Naive thymus-derived CD4-positive, alpha-beta T cell (primary cell): ENCODE measurements at regions of chr20 and their contacts with region 1.

Region 1: GRCh38 chr20:21303061-21303871 is at the start of gene XRN2:
- DNase-seq: peak; percentile 88 to 97 (median 92)
- ATAC-seq: peak; percentile 91
- H3K4me3 ChIP-seq: peak within 1 kb of the TSS; percentile 84
- H3K4me3 Mint-ChIP-seq: peak within 1 kb of the TSS; percentile 96 to 99 (median 97)
- H3K27ac ChIP-seq: peak within 1 kb of the TSS; percentile 95
- H3K27ac Mint-ChIP-seq: peak within 1 kb of the TSS; percentile 93 to 100 (median 99)
- H3K4me1 ChIP-seq: peaks cover 9 to 19% of the 10 kb centered on the region in 2 donors
- H3K4me1 Mint-ChIP-seq: peaks cover 22 to 39% (median 29%) of the 10 kb centered on the region in 7 donors
- H3K27me3 ChIP-seq: no peaks in the 10 kb centered on the region
- H3K27me3 Mint-ChIP-seq: no peaks in the 10 kb centered on the region
- total RNA-seq, gene XRN2: 51.7 to 71.0 (median 56.5) TPM

Region 2: GRCh38 chr20:20712474-20713243 is 590.6 kb before region 1 on chr20 and contains the start of gene RALGAPA2:
- CTCF ChIA-PET with region 1: no interaction called
- POLR2A ChIA-PET with region 1: interaction called, 3 read pairs
- intact Hi-C with region 1: loop called (anchors 1 to 2 kb)
- DNase-seq: peak; percentile 91 to 97 (median 95)
- ATAC-seq: peak; percentile 98
- H3K4me3 ChIP-seq: peak within 1 kb of the TSS; percentile 97
- H3K4me3 Mint-ChIP-seq: peak within 1 kb of the TSS; percentile 89 to 98 (median 96)
- H3K27ac ChIP-seq: peak within 1 kb of the TSS; percentile 91
- H3K27ac Mint-ChIP-seq: peak within 1 kb of the TSS; percentile 90 to 98 (median 95)
- H3K4me1 ChIP-seq: peaks cover 9% of the 10 kb centered on the region in 2 donors
- H3K4me1 Mint-ChIP-seq: peaks cover 23 to 41% (median 29%) of the 10 kb centered on the region in 7 donors
- H3K27me3 ChIP-seq: no peaks in the 10 kb centered on the region
- H3K27me3 Mint-ChIP-seq: no peaks in the 10 kb centered on the region
- total RNA-seq, gene RALGAPA2: 27.5 to 45.4 (median 35.1) TPM

Region 3: GRCh38 chr20:20856306-20856705 is 447.0 kb before region 1 on chr20:
- CTCF ChIA-PET with region 1: no interaction called
- POLR2A ChIA-PET with region 1: no interaction called
- intact Hi-C with region 1: no loop called
- DNase-seq: no peak
- ATAC-seq: peak; percentile 26
- H3K4me3 ChIP-seq: no peak overlapping the region
- H3K4me3 Mint-ChIP-seq: no peak overlapping the region
- H3K27ac ChIP-seq: no peak overlapping the region
- H3K27ac Mint-ChIP-seq: no peak overlapping the region
- H3K4me1 ChIP-seq: no peaks in the 10 kb centered on the region
- H3K4me1 Mint-ChIP-seq: no peaks in the 10 kb centered on the region
- H3K27me3 ChIP-seq: no peaks in the 10 kb centered on the region
- H3K27me3 Mint-ChIP-seq: peaks cover 11 to 37% (median 29%) of the 10 kb centered on the region in 5 donors

Region 4: GRCh38 chr20:21125849-21126580 is 177.3 kb before region 1 on chr20 and contains the start of gene KIZ:
- CTCF ChIA-PET with region 1: no interaction called
- POLR2A ChIA-PET with region 1: interaction called, 4 read pairs
- intact Hi-C with region 1: loop called (anchors 1 kb)
- DNase-seq: peak; percentile 93 to 100 (median 97)
- ATAC-seq: peak; percentile 100
- H3K4me3 ChIP-seq: peak within 1 kb of the TSS; percentile 56
- H3K4me3 Mint-ChIP-seq: peak within 1 kb of the TSS; percentile 86 to 98 (median 90)
- H3K27ac ChIP-seq: peak within 1 kb of the TSS; percentile 77
- H3K27ac Mint-ChIP-seq: peak within 1 kb of the TSS; percentile 70 to 97 (median 88)
- H3K4me1 ChIP-seq: peaks cover 10 to 16% of the 10 kb centered on the region in 2 donors
- H3K4me1 Mint-ChIP-seq: peaks cover 11 to 35% (median 21%) of the 10 kb centered on the region in 7 donors
- H3K27me3 ChIP-seq: no peaks in the 10 kb centered on the region
- H3K27me3 Mint-ChIP-seq: peaks cover 0 to 4% (median 0%) of the 10 kb centered on the region in 5 donors
- total RNA-seq, gene KIZ: 15.6 to 47.4 (median 32.5) TPM

Region 5: GRCh38 chr20:21262812-21263211 is 40.5 kb before region 1 on chr20:
- CTCF ChIA-PET with region 1: no interaction called
- POLR2A ChIA-PET with region 1: no interaction called
- intact Hi-C with region 1: no loop called
- DNase-seq: no peak
- ATAC-seq: no peak
- H3K4me3 ChIP-seq: no peak overlapping the region
- H3K4me3 Mint-ChIP-seq: no peak overlapping the region
- H3K27ac ChIP-seq: no peak overlapping the region
- H3K27ac Mint-ChIP-seq: no peak overlapping the region
- H3K4me1 ChIP-seq: no peaks in the 10 kb centered on the region
- H3K4me1 Mint-ChIP-seq: peaks cover 0 to 2% (median 0%) of the 10 kb centered on the region in 7 donors
- H3K27me3 ChIP-seq: no peaks in the 10 kb centered on the region
- H3K27me3 Mint-ChIP-seq: peaks cover 2 to 30% (median 9%) of the 10 kb centered on the region in 5 donors

Region 6: DNA sequence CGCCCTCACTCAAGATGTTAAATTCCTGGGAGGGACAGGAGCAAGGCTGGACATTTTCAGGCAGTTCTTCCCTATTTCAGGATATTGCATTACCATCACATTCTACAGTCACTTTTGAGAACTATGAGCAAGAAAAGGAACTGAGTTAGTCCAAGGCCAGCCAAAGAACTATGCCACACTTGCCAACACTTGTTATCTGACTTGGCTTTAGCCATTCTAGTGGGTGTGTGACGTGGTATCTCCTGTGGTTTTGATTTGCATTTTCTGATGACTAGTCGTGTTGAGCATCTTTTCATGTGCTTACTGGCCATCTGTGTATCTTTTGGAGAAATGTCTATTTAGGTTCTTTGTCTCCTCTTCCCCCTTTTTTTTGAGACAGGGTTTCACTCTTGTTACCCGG is 11.9 kb after region 1 on chr20:
- CTCF ChIA-PET with region 1: no interaction called
- POLR2A ChIA-PET with region 1: interaction called, 4 read pairs
- intact Hi-C with region 1: loop called in 1 of 2 experiments (anchors 1 kb)
- DNase-seq: no peak
- ATAC-seq: peak; percentile 83
- H3K4me3 ChIP-seq: no peak overlapping the region
- H3K4me3 Mint-ChIP-seq: peak overlapping the region in 8 of 10 donors; percentile 1 to 67 (median 27)
- H3K27ac ChIP-seq: no peak overlapping the region
- H3K27ac Mint-ChIP-seq: peak overlapping the region in 2 of 9 donors; percentile 21 to 36
- H3K4me1 ChIP-seq: peaks cover 16 to 23% of the 10 kb centered on the region in 2 donors
- H3K4me1 Mint-ChIP-seq: peaks cover 64 to 91% (median 83%) of the 10 kb centered on the region in 7 donors
- H3K27me3 ChIP-seq: no peaks in the 10 kb centered on the region
- H3K27me3 Mint-ChIP-seq: no peaks in the 10 kb centered on the region

Region 7: GRCh38 chr20:21342656-21343345 is 39.5 kb after region 1 on chr20:
- CTCF ChIA-PET with region 1: no interaction called
- POLR2A ChIA-PET with region 1: interaction called, 3 read pairs
- intact Hi-C with region 1: loop called in 1 of 2 experiments (anchors 5 kb)
- DNase-seq: no peak
- ATAC-seq: no peak
- H3K4me3 ChIP-seq: no peak overlapping the region
- H3K4me3 Mint-ChIP-seq: no peak overlapping the region
- H3K27ac ChIP-seq: no peak overlapping the region
- H3K27ac Mint-ChIP-seq: no peak overlapping the region
- H3K4me1 ChIP-seq: no peaks in the 10 kb centered on the region
- H3K4me1 Mint-ChIP-seq: peaks cover 0 to 12% (median 0%) of the 10 kb centered on the region in 7 donors
- H3K27me3 ChIP-seq: no peaks in the 10 kb centered on the region
- H3K27me3 Mint-ChIP-seq: no peaks in the 10 kb centered on the region

Region 8: DNA sequence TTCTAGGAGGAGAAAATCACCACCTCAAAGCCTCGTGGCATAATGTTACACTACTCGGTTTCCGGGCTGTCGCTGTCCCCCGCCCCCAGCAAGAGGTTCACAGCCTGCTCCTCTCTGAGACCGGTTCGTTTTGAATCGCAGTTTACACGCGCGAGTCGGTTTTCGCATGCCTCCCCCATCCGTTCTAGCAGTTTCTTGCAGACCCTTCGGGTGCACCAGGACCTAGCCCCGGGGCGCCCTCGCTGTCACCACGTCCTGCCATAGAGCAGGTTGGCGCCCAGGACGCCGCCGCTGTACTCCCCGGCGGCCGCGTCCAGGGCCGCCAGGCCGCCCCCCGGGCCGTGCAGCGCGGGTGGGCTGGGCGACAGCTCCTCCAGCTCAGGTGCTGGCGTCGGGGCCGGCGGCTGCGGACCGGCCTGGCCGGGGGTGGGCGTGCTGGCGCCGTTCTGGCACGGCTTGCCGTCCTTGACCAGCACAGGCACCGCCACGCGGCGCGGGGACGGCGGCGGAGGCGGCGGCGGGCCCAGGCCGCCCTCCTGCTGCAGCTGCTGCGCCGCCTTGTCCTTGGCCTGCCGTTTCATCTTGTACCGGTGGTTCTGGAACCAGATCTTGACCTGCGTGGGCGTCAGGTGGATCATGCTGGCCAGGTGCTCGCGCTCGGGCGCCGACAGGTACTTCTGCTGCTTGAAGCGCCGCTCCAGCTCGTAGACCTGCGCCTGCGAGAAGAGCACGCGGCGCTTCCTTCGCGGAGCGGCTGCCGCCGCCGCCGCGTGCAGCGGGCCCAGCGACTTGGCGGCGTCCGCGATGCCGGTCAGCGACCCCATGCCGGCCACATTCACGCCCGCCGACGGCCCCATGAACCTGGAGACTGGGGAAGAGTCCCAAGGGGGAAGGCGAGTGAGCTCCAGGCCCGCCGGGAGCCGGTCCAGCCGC is 92.7 kb after region 1 on chr20:
- CTCF ChIA-PET with region 1: no interaction called
- POLR2A ChIA-PET with region 1: interaction called, 3 read pairs
- intact Hi-C with region 1: loop called (anchors 1 to 2 kb)
- DNase-seq: peak; percentile 21 to 77 (median 67)
- ATAC-seq: peak; percentile 86
- H3K4me3 ChIP-seq: no peak overlapping the region
- H3K4me3 Mint-ChIP-seq: peak overlapping the region; percentile 39 to 85 (median 76)
- H3K27ac ChIP-seq: no peak overlapping the region
- H3K27ac Mint-ChIP-seq: peak overlapping the region in 6 of 9 donors; percentile 16 to 76 (median 60)
- H3K4me1 ChIP-seq: peaks cover 0 to 16% of the 10 kb centered on the region in 2 donors
- H3K4me1 Mint-ChIP-seq: peaks cover 11 to 37% (median 30%) of the 10 kb centered on the region in 7 donors
- H3K27me3 ChIP-seq: peaks cover 43 to 63% of the 10 kb centered on the region in 2 donors
- H3K27me3 Mint-ChIP-seq: peaks cover 63 to 80% (median 75%) of the 10 kb centered on the region in 5 donors